Ascending aorta (tissue), 2 donors: ENCODE measurements at regions of chr1 and their contacts with region 1.

Region 1: DNA sequence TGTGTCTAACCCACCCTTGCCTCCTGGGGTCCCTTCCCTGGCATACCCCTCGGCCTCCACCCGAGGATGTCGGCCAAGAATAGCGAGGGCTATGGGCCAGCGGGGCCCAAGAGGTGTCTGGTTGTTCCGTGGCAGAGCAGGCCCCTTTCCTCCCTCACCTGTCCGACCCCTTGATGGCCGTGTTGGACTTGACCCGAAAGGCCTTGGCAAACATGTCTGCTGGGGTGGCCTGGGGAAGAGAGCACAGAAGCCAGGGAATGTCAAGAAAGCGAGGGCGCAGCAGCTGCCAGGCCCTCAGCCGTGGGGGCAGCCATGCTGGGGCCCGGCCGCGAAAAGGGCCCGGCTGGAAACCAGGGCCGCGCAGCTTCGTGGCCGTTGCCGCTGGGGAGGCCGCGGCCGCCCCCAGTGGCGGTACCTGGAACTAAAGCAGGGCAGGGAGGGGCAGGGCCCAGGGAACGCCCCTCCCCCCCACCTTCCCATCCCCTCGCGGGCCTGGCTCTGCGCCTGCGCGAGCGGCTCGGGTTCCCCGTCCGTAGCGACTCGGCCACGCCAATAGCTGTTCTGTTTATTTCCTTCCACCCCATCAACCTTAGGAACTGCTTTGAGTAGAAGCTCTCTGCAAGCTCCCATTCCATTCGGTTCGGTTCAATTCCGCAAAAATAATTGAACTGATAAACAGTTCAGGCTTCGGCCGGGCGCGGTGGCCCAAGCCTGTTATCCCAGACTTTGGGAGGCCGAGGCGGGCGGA is at the start of gene EIF2D:
- DNase-seq: peak; percentile 67 to 96
- H3K4me3 ChIP-seq: peak within 1 kb of the TSS; percentile 64 to 84
- H3K27ac ChIP-seq: peak within 1 kb of the TSS; percentile 84 to 85
- H3K4me1 ChIP-seq: peaks cover 3 to 11% of the 10 kb centered on the region in 2 donors
- H3K27me3 ChIP-seq: no peaks in the 10 kb centered on the region
- CTCF ChIP-seq: peak; percentile 98 to 99 (median 99)
- total RNA-seq, gene EIF2D: 40.2 TPM

Region 2: DNA sequence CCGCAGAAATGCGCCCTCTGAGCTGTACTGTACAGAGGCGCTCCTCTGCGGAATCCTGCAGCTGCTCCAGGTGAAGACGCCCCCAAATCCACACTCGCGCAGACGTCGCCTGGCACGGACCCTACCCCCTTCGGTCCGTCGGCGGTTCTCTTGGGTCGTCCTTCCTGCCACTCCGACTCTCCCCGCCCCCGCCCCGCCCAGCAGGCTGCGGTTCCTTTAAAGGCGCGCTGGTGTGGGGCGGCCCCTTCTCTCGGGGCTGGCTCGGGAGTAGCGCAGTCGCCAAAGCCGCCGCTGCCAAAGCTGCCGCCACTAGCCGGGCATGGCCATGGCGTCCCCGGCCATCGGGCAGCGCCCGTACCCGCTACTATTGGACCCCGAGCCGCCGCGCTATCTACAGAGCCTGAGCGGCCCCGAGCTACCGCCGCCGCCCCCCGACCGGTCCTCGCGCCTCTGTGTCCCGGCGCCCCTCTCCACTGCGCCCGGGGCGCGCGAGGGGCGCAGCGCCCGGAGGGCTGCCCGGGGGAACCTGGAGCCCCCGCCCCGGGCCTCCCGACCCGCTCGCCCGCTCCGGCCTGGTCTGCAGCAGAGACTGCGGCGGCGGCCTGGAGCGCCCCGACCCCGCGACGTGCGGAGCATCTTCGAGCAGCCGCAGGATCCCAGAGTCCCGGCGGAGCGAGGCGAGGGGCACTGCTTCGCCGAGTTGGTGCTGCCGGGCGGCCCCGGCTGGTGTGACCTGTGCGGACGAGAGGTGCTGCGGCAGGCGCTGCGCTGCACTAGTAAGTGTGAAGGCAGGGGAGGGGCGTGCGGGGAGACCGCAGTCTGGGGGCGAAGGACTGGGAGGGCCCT is 104.8 kb before region 1 on chr1 and contains the start of gene RASSF5:
- intact Hi-C with region 1: no loop called
- DNase-seq: peak; percentile 72 to 94
- H3K4me3 ChIP-seq: peak within 1 kb of the TSS; percentile 96 to 98
- H3K27ac ChIP-seq: peak within 1 kb of the TSS; percentile 65 to 75
- H3K4me1 ChIP-seq: peaks cover 8 to 44% of the 10 kb centered on the region in 2 donors
- H3K27me3 ChIP-seq: no peaks in the 10 kb centered on the region
- CTCF ChIP-seq: no peak
- total RNA-seq, gene RASSF5: 8.9 TPM

Region 3: GRCh38 chr1:206684478-206685333 is 72.4 kb after region 1 on chr1 and contains the start of gene MAPKAPK2:
- intact Hi-C with region 1: loop called (anchors 2 kb)
- DNase-seq: peak in 1 of 2 donors; percentile 88
- H3K4me3 ChIP-seq: peak within 1 kb of the TSS; percentile 72 to 89
- H3K27ac ChIP-seq: peak within 1 kb of the TSS; percentile 95 to 98
- H3K4me1 ChIP-seq: peaks cover 9 to 28% of the 10 kb centered on the region in 2 donors
- H3K27me3 ChIP-seq: no peaks in the 10 kb centered on the region
- CTCF ChIP-seq: no peak
- total RNA-seq, gene MAPKAPK2: 35.3 TPM